WTC11 (cell line): ENCODE measurements at regions of chr2 and their contacts with region 1.

Region 1: DNA sequence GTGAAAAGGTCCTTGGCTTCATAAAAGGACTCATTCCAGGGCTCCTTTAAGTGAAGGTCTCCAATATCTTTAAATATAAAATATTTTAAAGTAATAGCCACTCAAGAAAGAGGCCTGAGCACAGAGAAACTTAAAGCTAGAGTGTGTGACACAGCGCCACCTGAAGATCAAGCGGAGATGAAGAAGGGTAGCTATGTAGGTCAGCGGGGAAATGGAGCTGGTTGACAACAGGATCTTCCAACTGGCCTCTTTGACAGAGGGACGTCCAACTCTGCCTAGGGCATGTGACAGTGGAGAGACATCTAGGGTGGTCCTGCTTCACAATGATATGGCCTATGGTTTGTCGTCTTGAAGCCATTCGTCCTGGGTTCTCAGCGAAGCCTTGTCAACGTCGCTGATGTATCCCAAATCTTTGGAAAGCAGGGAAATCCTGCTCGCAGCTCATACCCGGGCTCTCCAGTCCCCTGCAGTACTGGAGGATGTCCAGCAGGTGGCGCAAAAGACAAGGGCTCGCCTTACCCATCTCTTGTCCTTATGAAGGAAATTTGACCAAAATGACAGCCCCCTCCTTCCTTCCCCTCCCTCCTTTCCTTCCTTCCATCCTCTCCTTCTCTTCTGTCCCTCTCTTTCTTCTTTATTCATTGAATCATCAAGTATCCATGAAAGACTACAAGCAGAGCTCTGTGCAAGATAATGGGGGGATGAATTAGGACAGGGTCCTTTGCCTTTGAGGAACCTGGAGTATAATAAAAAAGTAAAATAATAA is 59.6 kb downstream of the LONRF2 start:
- DNase-seq: peak; percentile 84
- ATAC-seq: peak; percentile 74
- H3K4me3 Mint-ChIP-seq: peak overlapping the region; percentile 51
- H3K27ac Mint-ChIP-seq: no peak overlapping the region
- H3K4me1 Mint-ChIP-seq: peaks cover 12% of the 10 kb centered on the region
- H3K27me3 Mint-ChIP-seq: no peaks in the 10 kb centered on the region
- CTCF ChIP-seq: peak; percentile 99

Region 2: DNA sequence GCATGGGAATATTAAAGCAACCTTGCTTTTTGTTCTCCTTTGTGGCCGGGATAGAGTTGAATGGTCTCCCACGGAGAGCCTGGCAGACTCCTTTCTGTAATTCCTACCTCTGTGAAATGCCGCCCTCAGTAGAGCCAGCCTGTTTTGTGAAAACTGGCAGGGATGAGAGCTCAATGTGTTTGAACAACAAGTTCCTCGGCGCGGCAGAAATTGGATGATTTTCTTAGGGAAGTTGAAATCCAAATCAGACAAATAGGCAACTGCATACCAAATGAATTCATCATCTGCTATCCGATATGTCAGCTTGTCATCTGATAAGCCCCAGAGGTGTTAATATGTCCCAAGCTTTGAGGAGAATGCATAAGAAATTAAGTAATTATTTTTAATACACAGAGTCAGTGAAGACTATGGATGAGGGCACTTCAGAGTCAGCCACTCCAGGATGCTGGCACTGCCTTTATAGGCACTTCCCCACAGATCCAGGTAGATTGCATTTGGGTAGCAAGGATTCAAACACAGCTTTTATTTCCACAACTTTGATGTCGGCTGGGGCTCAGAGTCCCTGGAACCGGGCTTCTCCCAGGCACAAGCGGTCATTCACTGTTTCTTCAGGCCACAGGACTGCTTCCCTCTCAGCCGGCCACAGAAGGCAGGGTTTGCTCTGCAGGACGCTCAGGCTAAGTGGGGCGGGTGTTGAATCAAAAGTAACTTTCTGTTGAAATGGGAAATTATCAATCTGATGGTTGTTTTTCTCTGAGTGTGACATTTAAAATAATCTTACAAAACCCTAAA is 690.2 kb before region 1 on chr2:
- CTCF ChIA-PET with region 1: interaction called, 12 read pairs
- POLR2A ChIA-PET with region 1: no interaction called
- DNase-seq: no peak
- ATAC-seq: peak; percentile 67
- H3K4me3 Mint-ChIP-seq: 0 out of 2 replicates have a peak overlapping the region, but pooled peaks have one; percentile 7
- H3K27ac Mint-ChIP-seq: no peak overlapping the region
- H3K4me1 Mint-ChIP-seq: peaks cover 23% of the 10 kb centered on the region
- H3K27me3 Mint-ChIP-seq: no peaks in the 10 kb centered on the region; the same call in 1 of the 2 replicates
- CTCF ChIP-seq: no peak

Region 3: DNA sequence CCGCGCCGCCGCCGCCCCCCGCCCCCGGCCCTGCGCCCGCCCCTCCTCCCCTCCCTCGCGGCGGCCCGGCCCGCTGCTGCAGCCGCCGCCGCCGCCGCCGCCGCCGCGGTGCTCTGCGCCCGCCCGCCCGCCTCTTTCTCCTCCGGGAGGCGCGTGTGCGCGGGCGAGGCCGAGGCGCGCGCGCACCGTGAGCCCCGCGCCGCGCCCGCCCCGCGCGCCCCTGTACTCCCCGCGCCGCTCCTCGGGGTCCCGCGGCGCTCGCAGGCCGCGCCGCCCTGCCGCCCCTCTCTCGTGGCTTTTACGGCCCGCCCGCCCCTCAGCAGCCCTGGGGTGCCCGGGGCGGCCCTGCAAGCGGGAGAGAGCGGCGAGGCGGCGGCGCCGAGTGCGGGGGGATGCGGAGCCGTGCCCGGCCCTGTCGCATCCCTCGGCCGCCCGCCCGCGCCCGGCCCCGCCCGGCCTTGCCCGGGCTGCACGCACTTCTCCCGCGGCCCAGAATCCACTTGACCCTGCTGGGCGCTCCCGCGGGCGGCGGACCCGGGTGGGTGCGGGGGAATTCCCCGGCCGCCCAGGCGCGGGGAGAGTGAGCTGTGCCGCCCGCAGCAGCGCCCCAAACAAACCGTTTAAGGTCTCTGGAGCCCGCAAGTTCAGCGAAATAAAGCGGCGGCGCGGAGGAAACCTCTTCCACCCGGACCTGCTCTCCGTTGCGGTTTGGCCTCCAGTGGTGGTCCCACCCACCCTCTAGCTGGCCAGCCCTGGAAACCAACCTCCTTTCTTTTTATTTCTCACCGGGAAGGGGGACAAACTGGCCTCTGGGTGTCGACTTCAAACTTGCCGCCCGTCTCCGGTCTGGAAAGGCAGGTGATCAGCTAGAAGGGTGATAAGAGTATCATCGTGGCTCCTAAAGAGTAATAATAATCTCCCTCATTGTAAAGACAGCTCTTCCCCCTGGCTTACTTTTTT is 157.7 kb before region 1 on chr2:
- CTCF ChIA-PET with region 1: interaction called, 18 read pairs
- POLR2A ChIA-PET with region 1: no interaction called
- DNase-seq: peak; percentile 35
- ATAC-seq: peak; percentile 42
- H3K4me3 Mint-ChIP-seq: peak overlapping the region; percentile 78
- H3K27ac Mint-ChIP-seq: no peak overlapping the region
- H3K4me1 Mint-ChIP-seq: peaks cover 22% of the 10 kb centered on the region
- H3K27me3 Mint-ChIP-seq: peaks cover 71% of the 10 kb centered on the region
- CTCF ChIP-seq: no peak

Region 4: GRCh38 chr2:100246163-100247145 is 16.3 kb before region 1 on chr2:
- CTCF ChIA-PET with region 1: interaction called, 76 read pairs
- POLR2A ChIA-PET with region 1: no interaction called
- DNase-seq: peak; percentile 29
- ATAC-seq: peak; percentile 47
- H3K4me3 Mint-ChIP-seq: no peak overlapping the region
- H3K27ac Mint-ChIP-seq: no peak overlapping the region
- H3K4me1 Mint-ChIP-seq: no peaks in the 10 kb centered on the region; the same call in 1 of the 2 replicates
- H3K27me3 Mint-ChIP-seq: peaks cover 3% of the 10 kb centered on the region; the same call in 1 of the 2 replicates
- CTCF ChIP-seq: peak; percentile 57

Region 5: DNA sequence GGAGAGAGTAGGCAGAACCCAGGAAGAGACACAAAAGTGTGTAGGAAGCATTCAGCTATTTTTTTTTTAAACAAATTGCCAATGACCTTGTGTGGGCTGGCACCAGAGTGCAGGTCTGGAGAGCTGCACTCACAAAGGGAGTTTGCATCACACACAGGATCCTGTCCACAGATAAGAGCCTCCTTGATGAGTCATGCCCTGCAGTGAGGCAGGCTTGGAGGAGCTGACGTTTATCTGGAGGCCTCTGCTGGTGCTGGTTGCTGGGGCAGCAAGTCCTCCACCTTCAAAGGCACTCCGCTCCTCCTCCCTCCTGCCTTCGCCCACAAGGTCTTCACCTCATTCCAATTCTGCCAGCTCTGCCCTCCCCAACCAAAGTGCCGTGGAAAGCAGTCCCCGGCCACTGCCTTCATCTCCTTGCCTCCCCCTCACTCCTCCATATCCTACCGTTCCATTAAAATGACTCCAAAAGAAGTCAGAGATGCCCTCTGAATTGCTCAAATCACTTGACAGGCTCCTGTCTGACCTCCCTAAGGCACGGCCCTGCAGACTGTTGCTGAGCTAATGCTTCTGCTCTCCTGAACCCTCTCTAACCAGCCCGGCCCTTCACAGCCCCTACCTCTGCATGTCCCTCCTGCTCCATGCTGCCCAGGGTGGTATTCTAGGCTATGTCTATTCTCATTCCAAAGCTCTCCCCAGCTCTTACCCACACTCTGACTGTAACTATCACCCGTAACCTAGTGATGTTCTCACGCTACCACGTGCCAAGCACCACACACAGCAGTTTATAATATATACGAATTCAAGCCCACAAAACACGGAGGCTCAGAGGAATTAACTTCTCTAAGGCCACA is 28.6 kb after region 1 on chr2:
- CTCF ChIA-PET with region 1: interaction called, 46 read pairs
- POLR2A ChIA-PET with region 1: no interaction called
- DNase-seq: no peak
- ATAC-seq: peak; percentile 43
- H3K4me3 Mint-ChIP-seq: no peak overlapping the region
- H3K27ac Mint-ChIP-seq: no peak overlapping the region
- H3K4me1 Mint-ChIP-seq: peaks cover 14% of the 10 kb centered on the region
- H3K27me3 Mint-ChIP-seq: no peaks in the 10 kb centered on the region
- CTCF ChIP-seq: no peak

Region 6: DNA sequence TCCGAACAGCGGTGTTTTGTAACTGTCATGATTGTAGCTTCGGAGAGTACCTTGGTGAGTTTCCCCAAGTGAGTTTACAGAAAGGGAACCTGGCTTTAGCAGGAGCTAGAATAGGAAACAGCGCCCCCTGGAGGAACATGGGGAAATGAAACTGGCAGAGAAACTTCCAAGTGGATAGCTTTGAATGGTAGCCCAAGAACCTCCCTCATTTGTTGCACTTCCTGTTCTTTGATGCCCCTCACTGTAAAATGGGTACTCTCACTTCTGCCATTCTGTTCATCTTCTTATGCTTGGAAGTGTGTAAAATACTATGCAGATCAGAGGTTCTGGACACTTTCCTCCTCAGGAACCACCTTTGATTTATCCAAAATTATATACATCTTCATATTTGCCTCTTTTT is 118.5 kb after region 1 on chr2:
- CTCF ChIA-PET with region 1: interaction called, 433 read pairs
- POLR2A ChIA-PET with region 1: no interaction called
- DNase-seq: peak; percentile 91
- ATAC-seq: peak; percentile 89
- H3K4me3 Mint-ChIP-seq: no peak overlapping the region
- H3K27ac Mint-ChIP-seq: no peak overlapping the region
- H3K4me1 Mint-ChIP-seq: 0 out of 2 replicates have a peak, but pooled peaks cover 2% of the 10 kb centered on the region
- H3K27me3 Mint-ChIP-seq: no peaks in the 10 kb centered on the region
- CTCF ChIP-seq: peak; percentile 95

Region 7: GRCh38 chr2:100416935-100417710 is 154.4 kb after region 1 on chr2 and contains the start of gene CHST10:
- CTCF ChIA-PET with region 1: interaction called, 33 read pairs
- POLR2A ChIA-PET with region 1: no interaction called
- DNase-seq: peak; percentile 58
- ATAC-seq: peak; percentile 81
- H3K4me3 Mint-ChIP-seq: peak within 1 kb of the TSS; percentile 92
- H3K27ac Mint-ChIP-seq: peak within 1 kb of the TSS; percentile 92
- H3K4me1 Mint-ChIP-seq: peaks cover 53% of the 10 kb centered on the region
- H3K27me3 Mint-ChIP-seq: no peaks in the 10 kb centered on the region
- CTCF ChIP-seq: no peak
- total RNA-seq, gene CHST10: 19.9 to 24.4 TPM (median 21.6 TPM) in 3 replicates